PC-3 (cell line): ENCODE measurements at regions of chr11 and their contacts with region 1.

Region 1: DNA sequence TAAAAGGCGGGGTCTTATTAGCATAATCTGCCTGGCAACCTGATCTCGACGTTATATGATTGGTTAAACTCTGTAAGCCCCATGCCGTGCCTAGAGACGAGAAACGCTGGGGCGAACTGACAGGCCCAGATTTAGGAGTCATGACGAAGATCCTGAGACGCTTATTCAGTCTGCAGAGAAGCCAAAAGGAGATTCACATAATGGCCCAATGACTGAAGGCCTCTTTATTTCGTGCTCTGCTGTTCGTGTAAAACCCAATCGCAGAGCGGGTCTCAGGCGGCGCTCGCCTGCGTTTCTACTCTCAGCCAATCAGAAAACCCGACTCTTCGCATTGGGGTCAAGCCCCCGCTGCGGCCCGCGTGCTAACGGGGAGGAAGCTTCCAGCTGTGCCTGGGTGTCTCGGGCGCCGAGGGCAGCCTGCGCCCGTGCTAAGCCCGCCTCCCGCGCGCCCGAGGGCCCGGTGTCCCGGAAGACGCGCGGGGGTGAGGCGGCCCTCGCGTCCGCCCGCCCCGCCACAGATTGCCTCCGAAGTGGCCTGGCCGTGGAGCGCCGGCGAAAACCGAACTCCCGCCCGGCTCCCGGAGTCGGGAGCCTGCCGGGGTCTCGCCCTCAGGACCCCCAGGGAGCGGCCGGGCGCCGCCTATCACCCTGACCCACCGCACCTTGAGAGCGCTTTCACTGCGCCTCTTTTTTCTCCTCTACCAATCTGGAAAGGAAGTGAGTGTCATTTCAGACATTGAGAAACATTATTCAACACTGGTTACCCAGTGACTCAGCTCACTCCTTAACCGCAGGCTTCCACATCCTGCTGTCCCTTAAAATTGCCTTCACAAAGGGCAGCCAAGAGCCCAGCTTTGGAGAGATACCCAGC is 446 bp upstream of the PRDM10 start:
- DNase-seq: peak; percentile 99
- ATAC-seq: peak; percentile 68
- H3K4me3 ChIP-seq: peak overlapping the region; percentile 86
- H3K27ac ChIP-seq: peak overlapping the region; percentile 98
- H3K4me1 ChIP-seq: peaks cover 26% of the 10 kb centered on the region
- H3K27me3 ChIP-seq: no peaks in the 10 kb centered on the region
- CTCF ChIP-seq: 0 out of 2 replicates have a peak, but pooled peaks have one; percentile 7

Region 2: GRCh38 chr11:129922674-129923073 is 80.4 kb before region 1 on chr11:
- CTCF ChIA-PET with region 1: interaction called, 4 read pairs
- POLR2A ChIA-PET with region 1: no interaction called
- intact Hi-C with region 1: loop called (anchors 2 kb)
- DNase-seq: peak; percentile 30
- ATAC-seq: no peak; the same call in 1 of the 2 replicates
- H3K4me3 ChIP-seq: no peak overlapping the region
- H3K27ac ChIP-seq: no peak overlapping the region
- H3K4me1 ChIP-seq: peaks cover 8% of the 10 kb centered on the region
- H3K27me3 ChIP-seq: no peaks in the 10 kb centered on the region
- CTCF ChIP-seq: no peak

Region 3: GRCh38 chr11:130037058-130037457 is 34.0 kb after region 1 on chr11:
- CTCF ChIA-PET with region 1: no interaction called
- POLR2A ChIA-PET with region 1: interaction called, 22 read pairs
- intact Hi-C with region 1: loop called (anchors 2 kb)
- DNase-seq: peak; percentile 75
- ATAC-seq: peak; percentile 65
- H3K4me3 ChIP-seq: no peak overlapping the region
- H3K27ac ChIP-seq: peak overlapping the region; percentile 16; the same call in 1 of the 2 replicates
- H3K4me1 ChIP-seq: peaks cover 11% of the 10 kb centered on the region
- H3K27me3 ChIP-seq: no peaks in the 10 kb centered on the region
- CTCF ChIP-seq: no peak

Region 4: DNA sequence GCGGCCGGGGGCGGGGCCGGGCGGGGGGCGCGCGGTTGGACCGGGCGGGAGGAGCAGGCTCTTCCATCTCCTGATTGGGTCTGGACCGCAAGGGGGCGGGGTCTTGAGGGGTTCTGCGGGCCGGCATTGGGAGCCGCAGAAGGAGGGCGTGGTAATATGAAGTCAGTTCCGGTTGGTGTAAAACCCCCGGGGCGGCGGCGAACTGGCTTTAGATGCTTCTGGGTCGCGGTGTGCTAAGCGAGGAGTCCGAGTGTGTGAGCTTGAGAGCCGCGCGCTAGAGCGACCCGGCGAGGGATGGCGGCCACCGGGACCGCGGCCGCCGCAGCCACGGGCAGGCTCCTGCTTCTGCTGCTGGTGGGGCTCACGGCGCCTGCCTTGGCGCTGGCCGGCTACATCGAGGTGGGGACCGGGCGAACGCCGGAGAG is 66.6 kb after region 1 on chr11 and contains the start of gene APLP2:
- CTCF ChIA-PET with region 1: interaction called, 4 read pairs
- POLR2A ChIA-PET with region 1: interaction called, 16 read pairs
- intact Hi-C with region 1: loop called (anchors 1 kb)
- DNase-seq: peak; percentile 99
- ATAC-seq: peak; percentile 77
- H3K4me3 ChIP-seq: peak within 1 kb of the TSS; percentile 78
- H3K27ac ChIP-seq: peak within 1 kb of the TSS; percentile 77
- H3K4me1 ChIP-seq: peaks cover 22% of the 10 kb centered on the region
- H3K27me3 ChIP-seq: no peaks in the 10 kb centered on the region
- CTCF ChIP-seq: no peak
- total RNA-seq, gene APLP2: 345 and 371 TPM in 2 replicates

Region 5: GRCh38 chr11:130163346-130164220 is 160.5 kb after region 1 on chr11:
- CTCF ChIA-PET with region 1: no interaction called
- POLR2A ChIA-PET with region 1: interaction called, 31 read pairs
- intact Hi-C with region 1: no loop called
- DNase-seq: peak; percentile 51
- ATAC-seq: no peak
- H3K4me3 ChIP-seq: no peak overlapping the region; the same call in 1 of the 2 replicates
- H3K27ac ChIP-seq: peak overlapping the region; percentile 22
- H3K4me1 ChIP-seq: peaks cover 74% of the 10 kb centered on the region
- H3K27me3 ChIP-seq: no peaks in the 10 kb centered on the region
- CTCF ChIP-seq: no peak; the same call in 1 of the 2 replicates